Panc1 (cell line): ENCODE measurements at regions of chrX and their contacts with region 1.

Region 1: GRCh38 chrX:110163488-110163887 is 154.4 kb downstream of the AMMECR1 start:
- DNase-seq: no peak
- ATAC-seq: no peak
- H3K4me3 ChIP-seq: no peak overlapping the region
- H3K27ac ChIP-seq: no peak overlapping the region
- H3K4me1 ChIP-seq: no peaks in the 10 kb centered on the region
- H3K27me3 ChIP-seq: no peaks in the 10 kb centered on the region
- CTCF ChIP-seq: no peak

Region 2: DNA sequence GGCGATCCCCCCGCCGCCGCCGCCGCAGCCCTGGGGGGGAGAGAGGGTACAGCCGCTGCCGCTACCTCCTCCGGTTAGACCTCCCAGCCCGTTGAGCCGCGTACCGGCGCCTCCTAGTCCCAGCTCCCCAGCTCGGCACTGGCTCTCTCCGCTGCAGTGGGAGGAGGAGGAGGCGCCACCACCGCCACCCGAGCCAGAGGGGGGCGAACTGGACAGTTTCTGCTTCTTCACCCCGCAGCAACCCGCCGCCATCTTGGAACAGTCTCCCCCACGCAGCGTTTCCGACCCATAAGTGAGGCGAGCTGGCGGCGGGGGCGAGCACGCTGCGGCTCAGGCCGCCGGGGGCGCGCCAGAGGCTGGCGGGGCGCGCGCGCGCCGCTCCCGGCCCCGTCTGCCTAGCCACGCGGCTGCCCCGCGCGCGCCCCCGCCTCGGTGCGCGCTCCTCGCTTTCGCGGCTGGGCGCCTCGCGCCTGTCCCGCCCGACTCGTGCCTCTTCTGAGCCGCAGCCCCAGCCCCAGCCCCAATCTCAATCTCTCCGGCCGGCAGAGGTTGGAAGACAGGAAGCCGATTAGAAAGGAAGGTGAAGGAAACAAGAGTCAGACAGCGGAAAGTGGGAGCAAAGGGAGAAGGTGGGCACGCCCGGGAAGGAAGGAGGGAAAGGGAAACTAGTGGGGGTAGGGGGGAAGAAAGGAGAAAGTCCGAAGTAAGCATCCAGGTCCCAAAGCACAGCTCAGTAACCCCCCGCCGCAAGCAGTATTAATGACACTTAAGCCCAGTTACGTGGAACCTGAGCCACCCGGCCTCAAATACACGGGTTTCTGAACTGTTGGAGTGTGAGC is 154.6 kb after region 1 on chrX and contains the start of gene AMMECR1:
- CTCF ChIA-PET with region 1: no interaction called
- POLR2A ChIA-PET with region 1: no interaction called
- in situ Hi-C with region 1: no loop called
- intact Hi-C with region 1: loop called (anchors 5 kb)
- DNase-seq: no peak
- ATAC-seq: peak; percentile 95
- H3K4me3 ChIP-seq: peak within 1 kb of the TSS; percentile 84 to 89
- H3K27ac ChIP-seq: peak within 1 kb of the TSS; percentile 85
- H3K4me1 ChIP-seq: peaks cover 10% of the 10 kb centered on the region
- H3K27me3 ChIP-seq: peaks cover 11% of the 10 kb centered on the region; the same call in 1 of the 2 replicates
- CTCF ChIP-seq: no peak
- total RNA-seq, gene AMMECR1: 15.0 TPM

Region 3: DNA sequence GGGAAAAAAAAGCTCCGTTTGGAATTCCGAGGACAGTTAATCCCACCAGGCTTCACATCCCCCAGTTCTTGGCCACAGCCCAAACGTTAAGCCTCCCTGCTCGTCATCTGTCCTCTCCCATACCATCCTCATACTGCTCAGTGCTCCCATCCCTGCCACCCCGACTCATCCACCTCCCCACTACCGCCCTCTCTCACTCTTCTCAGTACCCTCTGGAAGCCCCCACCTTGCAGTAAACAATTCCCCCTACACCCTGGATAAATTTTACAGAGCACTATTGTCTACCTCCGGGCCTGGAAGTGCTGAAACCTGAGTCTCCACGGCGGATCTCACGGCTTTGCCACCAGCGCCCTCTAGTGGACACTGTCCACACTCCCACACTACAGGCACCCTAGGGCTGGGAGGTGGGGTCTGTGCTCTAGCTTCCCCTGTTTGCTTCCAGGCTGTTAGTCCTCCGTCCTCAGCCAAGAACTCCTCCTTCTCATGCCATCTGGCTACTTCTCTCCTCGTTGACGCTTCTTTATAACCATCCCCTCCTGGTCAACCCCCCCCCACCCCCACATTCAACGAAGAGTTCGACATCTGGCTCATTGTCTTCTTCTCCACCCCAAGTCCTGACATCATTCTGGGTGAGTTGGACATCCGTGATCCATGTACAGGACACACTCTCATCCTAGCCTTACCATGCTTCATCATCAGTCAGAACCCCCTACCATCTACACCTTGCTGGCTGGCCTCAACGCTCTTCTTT is 249.7 kb after region 1 on chrX:
- CTCF ChIA-PET with region 1: interaction called, 4 read pairs
- POLR2A ChIA-PET with region 1: no interaction called
- in situ Hi-C with region 1: no loop called
- intact Hi-C with region 1: loop called (anchors 2 kb)
- DNase-seq: no peak
- ATAC-seq: peak; percentile 93
- H3K4me3 ChIP-seq: peak overlapping the region in 1 of 2 experiments; percentile 24; a peak in 1 of 4 replicates
- H3K27ac ChIP-seq: no peak overlapping the region
- H3K4me1 ChIP-seq: no peaks in the 10 kb centered on the region
- H3K27me3 ChIP-seq: no peaks in the 10 kb centered on the region
- CTCF ChIP-seq: peak; percentile 91